Breast epithelium (tissue), 4 donors: ENCODE measurements at regions of chr3 and their contacts with region 1.

Region 1: DNA sequence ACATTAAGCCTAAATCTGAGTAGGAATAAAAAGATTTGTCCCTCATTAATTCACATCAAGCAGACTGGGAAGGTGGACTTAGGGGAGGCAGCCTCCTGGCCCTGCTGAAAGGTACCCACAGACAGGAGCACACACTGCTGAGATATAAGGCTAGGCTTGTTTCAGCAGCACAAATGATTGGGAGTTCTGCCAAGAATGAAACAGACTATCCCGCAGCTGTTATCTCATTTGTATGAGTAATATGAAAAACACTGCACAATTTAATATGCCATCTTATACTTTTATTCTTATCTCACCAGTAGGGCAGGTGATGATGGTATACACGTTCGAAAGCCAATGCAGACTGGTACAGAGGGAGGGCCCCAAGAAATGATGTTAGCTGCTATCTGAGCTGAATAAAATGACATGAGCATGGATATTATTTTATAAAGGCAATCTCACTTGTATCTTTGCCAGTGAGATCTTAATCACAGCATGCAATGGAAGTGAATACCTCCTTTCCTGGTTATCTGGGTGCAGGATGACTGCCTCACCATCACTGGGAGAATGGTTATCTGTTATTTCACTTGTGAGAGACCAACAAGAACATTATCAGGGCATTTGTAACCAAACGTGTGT is 258.7 kb upstream of the PPP2R3A start:
- DNase-seq: no peak
- H3K4me3 ChIP-seq: no peak overlapping the region
- H3K27ac ChIP-seq: no peak overlapping the region
- H3K4me1 ChIP-seq: no peaks in the 10 kb centered on the region
- H3K27me3 ChIP-seq: no peaks in the 10 kb centered on the region
- CTCF ChIP-seq: no peak
- POLR2A ChIP-seq: no peak

Region 2: DNA sequence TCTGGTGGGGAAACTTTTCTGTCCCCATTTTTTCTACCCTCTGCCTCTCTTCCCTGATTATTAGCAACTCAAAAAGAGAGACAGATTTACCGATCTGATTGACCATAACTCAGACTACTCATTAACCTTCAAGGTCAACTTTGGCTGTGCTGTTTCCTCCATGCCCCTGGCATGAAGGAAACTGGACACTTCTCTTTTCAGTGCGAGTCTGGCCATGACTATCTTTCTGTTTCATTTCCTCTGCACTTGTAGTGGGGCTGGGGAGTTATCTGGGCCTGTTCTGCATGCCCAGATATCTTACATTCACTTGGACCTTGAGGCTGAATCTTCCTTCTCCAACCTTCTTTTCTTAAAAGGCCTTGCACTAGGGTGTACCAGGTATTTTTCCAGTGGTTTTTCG is 1600.3 kb before region 1 on chr3:
- intact Hi-C with region 1: loop called (anchors 10 kb)
- DNase-seq: no peak
- H3K4me3 ChIP-seq: no peak overlapping the region
- H3K27ac ChIP-seq: no peak overlapping the region
- H3K4me1 ChIP-seq: no peaks in the 10 kb centered on the region
- H3K27me3 ChIP-seq: no peaks in the 10 kb centered on the region
- CTCF ChIP-seq: no peak
- POLR2A ChIP-seq: no peak

Region 3: GRCh38 chr3:135368316-135368715 is 338.6 kb before region 1 on chr3:
- intact Hi-C with region 1: loop called (anchors 5 kb)
- DNase-seq: no peak
- H3K4me3 ChIP-seq: no peak overlapping the region
- H3K27ac ChIP-seq: no peak overlapping the region
- H3K4me1 ChIP-seq: no peaks in the 10 kb centered on the region
- H3K27me3 ChIP-seq: no peaks in the 10 kb centered on the region
- CTCF ChIP-seq: no peak
- POLR2A ChIP-seq: no peak

Region 4: DNA sequence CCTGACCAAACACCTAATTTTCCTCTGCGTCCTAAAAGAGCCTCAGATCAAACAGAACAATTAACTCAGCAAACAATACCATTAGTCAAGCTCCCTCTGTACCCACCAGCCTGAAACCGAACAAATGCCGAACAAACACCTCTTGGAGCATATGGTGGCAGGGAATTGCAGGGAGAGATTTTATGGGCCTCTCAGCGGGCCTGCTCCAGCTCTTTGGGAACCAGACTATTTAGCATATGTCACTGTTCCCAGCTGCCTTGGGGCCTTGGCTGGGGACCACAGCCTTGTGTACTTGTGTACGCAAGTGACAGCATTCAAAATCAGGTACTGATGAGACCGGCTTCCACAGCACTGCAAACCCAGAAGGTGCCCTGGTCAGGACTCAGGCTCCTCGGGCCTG is 130.1 kb before region 1 on chr3:
- intact Hi-C with region 1: no loop called
- DNase-seq: no peak
- H3K4me3 ChIP-seq: no peak overlapping the region
- H3K27ac ChIP-seq: no peak overlapping the region
- H3K4me1 ChIP-seq: no peaks in the 10 kb centered on the region
- H3K27me3 ChIP-seq: no peaks in the 10 kb centered on the region
- CTCF ChIP-seq: no peak
- POLR2A ChIP-seq: no peak